ENCODE measurements at regions of chr17 and their contacts with region 1.

Region 1: DNA sequence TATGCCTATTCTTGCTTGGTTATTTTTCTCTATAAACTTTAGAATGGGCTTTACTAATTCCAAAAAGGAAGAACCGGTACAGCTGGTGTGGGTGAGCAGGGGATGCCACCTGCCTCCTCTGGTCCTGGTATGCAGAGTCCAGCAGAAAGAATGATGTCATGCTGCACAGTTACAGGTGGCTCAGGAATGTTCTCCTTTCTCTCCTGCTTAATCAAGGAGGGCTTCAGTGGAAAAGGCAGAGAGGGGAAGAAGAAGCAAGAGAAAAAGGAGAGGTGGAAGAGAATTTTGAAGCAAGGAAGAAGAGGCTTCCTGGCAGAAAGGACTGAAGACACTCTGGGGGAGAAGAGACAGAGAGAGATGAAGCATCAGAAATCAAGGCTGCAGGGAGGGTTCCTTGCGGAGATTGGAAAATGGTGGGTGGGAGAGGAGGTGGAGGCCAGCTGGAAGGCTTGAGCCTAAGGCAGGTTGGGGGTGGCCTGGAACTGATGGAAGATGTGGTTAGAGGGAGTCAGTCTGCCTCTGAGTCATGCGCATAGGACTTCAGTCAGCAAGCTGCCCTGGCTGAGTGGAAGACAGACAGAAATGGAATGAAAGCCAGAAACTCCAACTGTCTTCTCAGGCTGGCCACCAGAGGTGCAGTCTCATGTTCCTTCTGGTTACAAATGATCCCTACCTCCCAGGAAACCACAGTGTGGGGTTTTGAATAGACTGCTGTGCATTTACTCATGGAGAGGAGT is 64.6 kb upstream of the CRHR1 start:
- DNase-seq: peak; percentile 74
- ATAC-seq: peak; percentile 85
- H3K4me3 ChIP-seq: no peak overlapping the region
- H3K27ac ChIP-seq: no peak overlapping the region
- H3K4me1 ChIP-seq: no peaks in the 10 kb centered on the region
- H3K27me3 ChIP-seq: peaks cover 29% of the 10 kb centered on the region
- CTCF ChIP-seq: peak; percentile 43; the same call in 1 of the 2 replicates
- POLR2A ChIP-seq: no peak
- RAD21 ChIP-seq: peak; percentile 27; the same call in 1 of the 2 replicates

Region 2: GRCh38 chr17:45852535-45853297 is 133.2 kb after region 1 on chr17:
- CTCF ChIA-PET with region 1: no interaction called
- POLR2A ChIA-PET with region 1: no interaction called
- dilution Hi-C with region 1: no loop called
- in situ Hi-C with region 1: no loop called
- intact Hi-C with region 1: loop called (anchors 5 kb)
- DNase-seq: peak; percentile 55
- ATAC-seq: peak; percentile 82
- H3K4me3 ChIP-seq: no peak overlapping the region
- H3K27ac ChIP-seq: no peak overlapping the region
- H3K4me1 ChIP-seq: no peaks in the 10 kb centered on the region
- H3K27me3 ChIP-seq: peaks cover 7% of the 10 kb centered on the region; the same call in 1 of the 2 replicates
- CTCF ChIP-seq: peak; percentile 89
- POLR2A ChIP-seq: no peak
- RAD21 ChIP-seq: peak; percentile 74